ENCODE measurements at regions of chr10 and their contacts with region 1.

Region 1: DNA sequence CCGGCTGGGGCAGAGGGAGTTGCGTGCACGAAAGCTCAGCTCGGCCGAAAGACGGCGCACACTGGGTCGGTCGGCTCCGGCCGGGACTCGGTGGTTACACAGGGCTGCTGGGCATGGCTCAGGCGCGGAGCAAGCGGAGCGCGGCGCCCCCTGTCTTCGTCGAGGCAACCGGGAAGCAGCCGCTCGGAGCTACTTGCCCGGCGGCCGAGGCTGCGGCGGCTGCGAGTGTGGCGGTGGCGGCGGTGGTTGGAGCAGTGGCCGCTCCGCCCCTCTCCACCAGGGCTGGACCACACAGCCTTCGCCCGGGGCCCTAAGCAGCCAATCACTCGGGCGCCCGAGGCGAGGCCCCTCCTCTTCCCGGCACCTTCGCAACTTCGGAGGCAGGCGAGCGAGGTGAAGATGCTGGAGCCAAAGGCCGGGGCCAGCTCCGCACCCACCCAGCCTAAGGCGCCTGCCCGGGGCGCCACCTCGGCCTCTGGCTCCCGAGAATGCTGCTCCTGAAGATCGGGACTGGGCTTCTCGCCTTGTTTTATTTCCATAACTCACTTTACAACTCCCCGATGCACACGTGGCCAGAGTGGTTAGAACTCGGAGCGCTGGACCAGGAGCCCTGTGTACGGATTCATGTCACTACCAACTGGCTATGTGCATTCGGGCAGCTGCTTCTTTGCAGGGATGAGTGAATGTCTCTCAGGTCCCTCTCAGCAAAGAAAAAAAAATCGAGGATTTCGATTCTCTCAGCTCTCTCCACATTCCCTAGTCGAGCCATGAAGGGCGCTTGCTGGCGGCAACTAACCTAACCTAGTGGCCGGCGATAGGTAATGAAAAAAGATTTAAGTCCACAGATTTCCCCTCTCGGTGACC is at the start of gene TLL2:
- DNase-seq: peak; percentile 95
- ATAC-seq: peak; percentile 96
- total RNA-seq, gene TLL2: 11.6 TPM

Region 2: GRCh38 chr10:96395931-96396877 is 117.7 kb before region 1 on chr10:
- intact Hi-C with region 1: loop called (anchors 5 kb)
- DNase-seq: peak; percentile 80
- ATAC-seq: peak; percentile 69

Region 3: DNA sequence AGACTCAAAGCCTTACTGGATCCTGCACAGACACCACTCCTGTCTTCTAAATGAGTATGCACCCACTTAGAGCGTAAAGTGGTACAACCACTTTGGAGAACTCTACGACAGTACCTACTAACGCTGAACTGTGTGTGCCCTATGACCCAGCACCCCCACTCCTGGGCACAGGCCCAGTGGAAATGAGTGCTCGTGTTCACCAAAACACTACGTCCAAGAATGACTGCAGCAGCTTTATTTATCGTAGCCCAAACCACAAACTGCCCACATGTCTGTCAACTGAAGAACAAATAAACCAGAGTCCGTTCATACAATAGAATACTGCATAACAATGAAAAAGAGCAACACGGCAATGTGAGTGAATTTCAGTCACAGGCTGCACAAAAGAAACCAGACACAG is 35.6 kb before region 1 on chr10:
- intact Hi-C with region 1: no loop called
- DNase-seq: no peak
- ATAC-seq: no peak

Region 4: DNA sequence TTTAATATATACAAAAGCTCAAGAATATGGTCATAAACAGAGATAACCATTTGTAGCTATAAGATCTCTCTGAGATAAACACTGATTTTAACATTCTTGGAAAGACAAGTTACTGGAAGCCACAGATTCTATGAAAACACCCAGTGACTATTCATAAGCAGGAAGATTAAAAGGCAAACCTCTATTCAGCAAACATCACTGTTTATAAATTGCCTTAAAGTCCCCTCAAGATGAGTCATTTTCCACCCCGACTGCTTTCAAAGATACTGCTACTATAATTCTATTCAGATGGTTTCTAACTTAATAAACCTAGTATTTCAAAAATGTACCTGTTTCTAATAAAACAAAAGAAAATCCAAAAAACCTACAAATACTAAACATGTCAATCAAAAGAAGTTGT is 51.8 kb after region 1 on chr10:
- intact Hi-C with region 1: no loop called
- DNase-seq: no peak
- ATAC-seq: no peak

Region 5: GRCh38 chr10:96910488-96911395 is 396.8 kb after region 1 on chr10:
- intact Hi-C with region 1: no loop called
- DNase-seq: no peak
- ATAC-seq: peak; percentile 67

Measured in left ventricle myocardium superior (tissue), 1 donor.